Posterior vena cava (tissue), 2 donors: ENCODE measurements at regions of chr1 and their contacts with region 1.

Region 1: GRCh38 chr1:30085811-30086770 is 637.3 kb downstream of the MATN1 start:
- DNase-seq: peak; percentile 89

Region 2: GRCh38 chr1:29230553-29231378 is 855.3 kb before region 1 on chr1 and contains the start of gene MECR:
- intact Hi-C with region 1: loop called in 1 of 2 experiments (anchors 2 kb)
- DNase-seq: peak; percentile 98
- total RNA-seq, gene MECR: 13.9 to 20.0 TPM

Region 3: DNA sequence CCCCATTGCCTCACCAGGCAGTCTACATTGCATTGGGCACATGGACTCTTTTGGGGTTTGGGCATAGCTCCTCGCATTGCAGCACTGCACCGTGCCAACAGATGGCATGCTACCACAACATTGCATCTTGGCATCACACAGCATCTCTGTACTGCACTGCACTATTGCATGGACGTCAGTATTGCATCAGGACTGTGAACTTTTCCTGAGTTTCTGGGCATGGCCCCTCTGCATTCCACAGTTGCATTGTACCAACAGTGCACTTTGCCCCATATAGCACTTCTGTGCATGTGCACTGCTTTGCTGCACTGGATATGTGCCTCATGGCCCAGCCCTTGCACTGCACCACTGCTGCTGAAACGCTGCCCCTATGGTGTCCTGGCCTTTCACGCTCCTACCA is 840.2 kb before region 1 on chr1:
- intact Hi-C with region 1: loop called in 1 of 2 experiments (anchors 10 kb)
- DNase-seq: peak; percentile 25

Region 4: GRCh38 chr1:29793101-29793546 is 293.0 kb before region 1 on chr1:
- intact Hi-C with region 1: loop called in 1 of 2 experiments (anchors 5 kb)
- DNase-seq: peak; percentile 92